Naive thymus-derived CD4-positive, alpha-beta T cell (primary cell): ENCODE measurements at regions of chr13 and their contacts with region 1.

Region 1: GRCh38 chr13:73702419-73703071 is 431.7 kb downstream of the KLF12 start:
- DNase-seq: peak in 7 of 9 donors; percentile 70 to 86 (median 82)
- ATAC-seq: peak; percentile 83
- H3K4me3 ChIP-seq: peak overlapping the region; percentile 39
- H3K4me3 Mint-ChIP-seq: peak overlapping the region; percentile 65 to 92 (median 80)
- H3K27ac ChIP-seq: peak overlapping the region; percentile 79
- H3K27ac Mint-ChIP-seq: peak overlapping the region; percentile 91 to 100 (median 98)
- H3K4me1 ChIP-seq: peaks cover 0 to 22% of the 10 kb centered on the region in 2 donors
- H3K4me1 Mint-ChIP-seq: peaks cover 18 to 66% (median 49%) of the 10 kb centered on the region in 7 donors
- H3K27me3 ChIP-seq: no peaks in the 10 kb centered on the region
- H3K27me3 Mint-ChIP-seq: no peaks in the 10 kb centered on the region

Region 2: GRCh38 chr13:73058736-73059459 is 643.6 kb before region 1 on chr13 and contains the start of gene KLF5:
- CTCF ChIA-PET with region 1: interaction called, 6 read pairs
- POLR2A ChIA-PET with region 1: interaction called, 4 read pairs
- intact Hi-C with region 1: loop called in 1 of 2 experiments (anchors 1 kb)
- DNase-seq: peak; percentile 93 to 98 (median 94)
- ATAC-seq: peak; percentile 98
- H3K4me3 ChIP-seq: peak within 1 kb of the TSS; percentile 58
- H3K4me3 Mint-ChIP-seq: peak within 1 kb of the TSS; percentile 82 to 94 (median 90)
- H3K27ac ChIP-seq: peak within 1 kb of the TSS; percentile 42
- H3K27ac Mint-ChIP-seq: peak within 1 kb of the TSS; percentile 38 to 92 (median 79)
- H3K4me1 ChIP-seq: peaks cover 4 to 10% of the 10 kb centered on the region in 2 donors
- H3K4me1 Mint-ChIP-seq: peaks cover 6 to 32% (median 23%) of the 10 kb centered on the region in 7 donors
- H3K27me3 ChIP-seq: peaks cover 5 to 10% of the 10 kb centered on the region in 2 donors
- H3K27me3 Mint-ChIP-seq: peaks cover 19 to 58% (median 40%) of the 10 kb centered on the region in 5 donors
- total RNA-seq, gene KLF5: 3.6 to 13.3 (median 5.7) TPM

Region 3: DNA sequence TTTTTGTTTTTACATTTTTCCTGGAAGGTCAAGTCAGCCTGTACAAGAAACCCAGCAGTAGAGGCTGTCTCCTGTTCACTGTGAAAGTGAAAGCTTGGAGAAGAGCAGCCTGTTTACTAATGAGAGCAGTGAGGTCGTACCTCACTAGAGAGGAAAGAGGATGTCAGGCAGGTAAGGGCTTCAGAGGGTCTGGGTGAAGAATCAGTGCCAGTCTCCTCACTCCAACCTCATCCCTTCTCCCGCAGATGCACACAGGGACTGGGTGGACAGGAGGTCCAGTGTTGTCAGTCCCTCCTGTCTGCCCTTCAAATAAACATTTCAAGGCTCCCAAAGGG is 181.3 kb before region 1 on chr13:
- CTCF ChIA-PET with region 1: no interaction called
- POLR2A ChIA-PET with region 1: interaction called, 12 read pairs
- intact Hi-C with region 1: loop called in 1 of 2 experiments (anchors 1 kb)
- DNase-seq: peak in 6 of 9 donors; percentile 35 to 57 (median 52)
- ATAC-seq: peak; percentile 79
- H3K4me3 ChIP-seq: peak overlapping the region; percentile 59
- H3K4me3 Mint-ChIP-seq: peak overlapping the region; percentile 82 to 93 (median 88)
- H3K27ac ChIP-seq: peak overlapping the region; percentile 71
- H3K27ac Mint-ChIP-seq: peak overlapping the region; percentile 89 to 99 (median 97)
- H3K4me1 ChIP-seq: peaks cover 0 to 13% of the 10 kb centered on the region in 2 donors
- H3K4me1 Mint-ChIP-seq: peaks cover 9 to 32% (median 25%) of the 10 kb centered on the region in 7 donors
- H3K27me3 ChIP-seq: no peaks in the 10 kb centered on the region
- H3K27me3 Mint-ChIP-seq: peaks cover 0 to 3% (median 0%) of the 10 kb centered on the region in 5 donors

Region 4: GRCh38 chr13:73625562-73626339 is 76.8 kb before region 1 on chr13:
- CTCF ChIA-PET with region 1: no interaction called
- POLR2A ChIA-PET with region 1: interaction called, 5 read pairs
- intact Hi-C with region 1: loop called (anchors 1 kb)
- DNase-seq: peak in 7 of 9 donors; percentile 31 to 80 (median 66)
- ATAC-seq: peak; percentile 90
- H3K4me3 ChIP-seq: no peak overlapping the region
- H3K4me3 Mint-ChIP-seq: peak overlapping the region; percentile 51 to 79 (median 74)
- H3K27ac ChIP-seq: no peak overlapping the region
- H3K27ac Mint-ChIP-seq: peak overlapping the region; percentile 62 to 91 (median 84)
- H3K4me1 ChIP-seq: peaks cover 13 to 32% of the 10 kb centered on the region in 2 donors
- H3K4me1 Mint-ChIP-seq: peaks cover 14 to 63% (median 54%) of the 10 kb centered on the region in 7 donors
- H3K27me3 ChIP-seq: no peaks in the 10 kb centered on the region
- H3K27me3 Mint-ChIP-seq: no peaks in the 10 kb centered on the region

Region 5: DNA sequence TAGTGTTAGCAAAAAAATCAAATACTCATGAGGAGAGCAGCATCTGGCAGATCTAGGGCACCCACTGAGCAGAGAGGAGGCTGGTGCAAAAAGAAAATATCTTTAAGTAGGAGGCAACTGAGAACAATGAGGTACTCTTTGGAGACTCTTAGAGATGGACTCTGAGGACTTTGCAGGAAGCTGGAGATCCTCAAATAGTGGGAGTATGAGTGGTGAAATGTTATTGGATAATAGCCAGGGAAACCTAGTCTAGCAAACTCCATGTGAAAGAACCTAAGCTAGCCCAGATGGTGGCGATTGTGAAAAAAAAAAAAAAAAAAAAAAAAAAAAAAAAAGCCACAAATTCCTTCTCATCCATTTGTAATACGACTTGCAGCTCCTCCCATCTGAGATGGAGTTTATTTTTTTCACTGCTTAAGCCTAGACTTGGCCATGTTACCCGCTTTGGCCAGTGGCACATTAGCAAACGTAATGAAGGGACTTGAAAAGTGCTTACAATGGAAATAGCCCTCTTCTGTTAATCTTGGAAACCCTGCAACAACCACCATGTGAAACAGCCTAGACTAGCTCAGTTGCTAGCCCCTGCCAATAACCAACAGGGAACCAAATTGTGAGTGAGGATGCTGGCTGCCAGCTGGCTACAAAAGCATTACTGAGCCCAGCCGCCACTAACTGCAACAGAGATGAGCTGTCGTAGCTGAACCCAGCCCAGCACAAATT is 44.6 kb before region 1 on chr13:
- CTCF ChIA-PET with region 1: no interaction called
- POLR2A ChIA-PET with region 1: no interaction called
- intact Hi-C with region 1: no loop called
- DNase-seq: no peak
- ATAC-seq: no peak
- H3K4me3 ChIP-seq: no peak overlapping the region
- H3K4me3 Mint-ChIP-seq: no peak overlapping the region
- H3K27ac ChIP-seq: no peak overlapping the region
- H3K27ac Mint-ChIP-seq: no peak overlapping the region
- H3K4me1 ChIP-seq: no peaks in the 10 kb centered on the region
- H3K4me1 Mint-ChIP-seq: peaks cover 0 to 5% (median 4%) of the 10 kb centered on the region in 7 donors
- H3K27me3 ChIP-seq: no peaks in the 10 kb centered on the region
- H3K27me3 Mint-ChIP-seq: peaks cover 0 to 4% (median 0%) of the 10 kb centered on the region in 5 donors

Region 6: DNA sequence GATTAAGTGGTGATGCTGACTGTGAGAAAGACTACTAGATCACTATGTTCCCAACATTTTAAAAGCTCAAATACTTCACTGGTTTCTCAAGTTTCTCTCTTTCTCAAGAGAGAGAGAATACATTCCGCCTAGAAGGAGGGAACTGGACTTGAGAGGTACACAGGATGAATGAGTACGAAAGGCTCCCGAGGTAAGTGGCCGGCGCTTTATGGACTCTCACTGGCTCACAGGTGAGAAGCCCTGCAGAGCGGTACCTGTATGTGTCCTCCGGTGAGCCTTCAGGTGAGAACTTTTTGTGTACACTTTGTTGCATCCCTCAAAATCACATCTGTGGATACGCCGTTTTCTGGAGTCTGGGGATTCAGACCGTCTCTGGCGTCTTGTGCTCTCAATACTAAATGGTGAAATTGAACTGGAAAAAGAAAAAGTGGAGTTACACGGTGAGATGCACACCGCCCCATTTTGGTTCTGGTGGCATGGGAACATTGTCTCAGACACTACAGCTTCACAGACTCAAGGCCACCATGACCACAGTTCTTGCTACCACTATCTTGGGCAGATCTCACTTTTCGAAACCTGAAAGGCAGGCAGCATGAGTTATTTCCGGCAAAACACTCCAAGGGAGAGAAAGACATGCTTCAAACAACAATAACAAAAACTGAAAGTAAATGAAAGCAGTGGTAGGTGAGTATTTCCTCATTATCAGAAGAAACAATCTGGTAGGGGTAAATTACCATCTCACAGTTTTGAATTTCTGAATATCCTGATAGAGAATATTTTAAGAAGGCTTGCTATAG is 12.8 kb after region 1 on chr13:
- CTCF ChIA-PET with region 1: interaction called, 4 read pairs
- POLR2A ChIA-PET with region 1: interaction called, 12 read pairs
- intact Hi-C with region 1: loop called (anchors 1 kb)
- DNase-seq: peak in 8 of 9 donors; percentile 53 to 85 (median 77)
- ATAC-seq: peak; percentile 90
- H3K4me3 ChIP-seq: peak overlapping the region; percentile 7
- H3K4me3 Mint-ChIP-seq: peak overlapping the region; percentile 72 to 86 (median 78)
- H3K27ac ChIP-seq: peak overlapping the region; percentile 67
- H3K27ac Mint-ChIP-seq: peak overlapping the region; percentile 87 to 99 (median 97)
- H3K4me1 ChIP-seq: peaks cover 34 to 43% of the 10 kb centered on the region in 2 donors
- H3K4me1 Mint-ChIP-seq: peaks cover 25 to 80% (median 58%) of the 10 kb centered on the region in 7 donors
- H3K27me3 ChIP-seq: no peaks in the 10 kb centered on the region
- H3K27me3 Mint-ChIP-seq: no peaks in the 10 kb centered on the region

Region 7: GRCh38 chr13:74372511-74372910 is 670.0 kb after region 1 on chr13:
- CTCF ChIA-PET with region 1: no interaction called
- POLR2A ChIA-PET with region 1: no interaction called
- intact Hi-C with region 1: no loop called
- DNase-seq: no peak
- ATAC-seq: no peak
- H3K4me3 ChIP-seq: no peak overlapping the region
- H3K4me3 Mint-ChIP-seq: no peak overlapping the region
- H3K27ac ChIP-seq: no peak overlapping the region
- H3K27ac Mint-ChIP-seq: no peak overlapping the region
- H3K4me1 ChIP-seq: no peaks in the 10 kb centered on the region
- H3K4me1 Mint-ChIP-seq: peaks cover 0 to under 1% (median 0%) of the 10 kb centered on the region in 7 donors
- H3K27me3 ChIP-seq: no peaks in the 10 kb centered on the region
- H3K27me3 Mint-ChIP-seq: no peaks in the 10 kb centered on the region